Heart left ventricle (tissue), 16 donors: ENCODE measurements at regions of chr5 and their contacts with region 1.

Region 1: DNA sequence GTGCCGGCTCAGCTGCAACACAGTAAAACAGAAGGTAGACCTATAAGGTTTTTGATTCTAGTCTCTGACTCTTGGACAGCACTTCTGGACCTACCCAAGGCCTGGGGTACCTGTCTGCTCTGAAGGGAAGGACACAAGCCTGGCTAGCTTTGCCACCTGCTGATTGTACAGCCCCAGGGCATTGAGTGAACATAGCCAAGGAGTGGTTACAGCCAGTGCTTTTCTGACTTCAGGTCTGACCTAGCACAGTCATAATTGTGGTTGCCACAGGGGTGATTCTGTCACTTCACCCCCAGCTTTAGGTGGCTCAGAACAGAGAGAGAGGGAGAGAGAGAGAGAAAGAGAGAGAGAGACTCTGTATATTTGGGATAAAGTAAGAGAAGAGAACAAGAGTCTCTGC is 118.4 kb downstream of the PLCXD3 start:
- DNase-seq: no peak
- ATAC-seq: peak in 2 of 4 donors; percentile 13 to 36
- H3K4me3 ChIP-seq: no peak overlapping the region
- H3K27ac ChIP-seq: no peak overlapping the region
- H3K4me1 ChIP-seq: peaks cover 0 to 21% (median 0%) of the 10 kb centered on the region in 12 donors
- H3K27me3 ChIP-seq: no peaks in the 10 kb centered on the region
- CTCF ChIP-seq: no peak
- POLR2A ChIP-seq: no peak

Region 2: DNA sequence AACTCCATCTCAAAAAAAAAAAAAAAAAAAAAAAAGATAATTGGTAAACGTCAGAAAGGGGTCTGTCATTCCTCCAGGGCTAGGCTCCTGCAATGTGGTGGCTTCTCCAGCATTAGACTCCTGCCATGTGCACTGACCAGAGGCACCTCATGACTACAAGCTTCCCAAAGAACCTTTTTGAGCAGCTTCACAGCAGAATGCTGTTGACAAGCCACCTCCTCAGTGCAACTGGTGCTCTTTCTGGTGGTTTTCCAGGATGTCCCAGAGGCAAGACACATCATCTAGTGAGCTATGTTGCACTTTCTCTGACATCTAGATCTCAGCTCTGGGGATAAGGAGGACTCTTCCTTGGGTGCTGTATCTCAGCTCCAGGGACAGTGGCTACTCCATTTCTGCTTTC is 568.6 kb before region 1 on chr5:
- intact Hi-C with region 1: no loop called
- DNase-seq: no peak
- ATAC-seq: no peak
- H3K4me3 ChIP-seq: no peak overlapping the region
- H3K27ac ChIP-seq: no peak overlapping the region
- H3K4me1 ChIP-seq: no peaks in the 10 kb centered on the region
- H3K27me3 ChIP-seq: no peaks in the 10 kb centered on the region
- CTCF ChIP-seq: no peak
- POLR2A ChIP-seq: no peak

Region 3: GRCh38 chr5:41094873-41095272 is 297.1 kb before region 1 on chr5:
- intact Hi-C with region 1: loop called in 1 of 10 experiments (anchors 10 kb)
- DNase-seq: no peak
- ATAC-seq: peak in 2 of 4 donors; percentile 47 to 49
- H3K4me3 ChIP-seq: no peak overlapping the region
- H3K27ac ChIP-seq: peak overlapping the region in 9 of 12 donors; percentile 9 to 56 (median 47)
- H3K4me1 ChIP-seq: peaks cover 0 to 51% (median 11%) of the 10 kb centered on the region in 12 donors
- H3K27me3 ChIP-seq: no peaks in the 10 kb centered on the region
- CTCF ChIP-seq: no peak
- POLR2A ChIP-seq: no peak

Region 4: GRCh38 chr5:41748631-41749030 is 356.6 kb after region 1 on chr5:
- intact Hi-C with region 1: no loop called
- DNase-seq: no peak
- ATAC-seq: no peak
- H3K4me3 ChIP-seq: no peak overlapping the region
- H3K27ac ChIP-seq: no peak overlapping the region
- H3K4me1 ChIP-seq: peaks cover 0 to 12% (median 2%) of the 10 kb centered on the region in 12 donors
- H3K27me3 ChIP-seq: no peaks in the 10 kb centered on the region
- CTCF ChIP-seq: no peak
- POLR2A ChIP-seq: no peak